HEK293T (cell line): ENCODE measurements at regions of chr17 and their contacts with region 1.

Region 1: DNA sequence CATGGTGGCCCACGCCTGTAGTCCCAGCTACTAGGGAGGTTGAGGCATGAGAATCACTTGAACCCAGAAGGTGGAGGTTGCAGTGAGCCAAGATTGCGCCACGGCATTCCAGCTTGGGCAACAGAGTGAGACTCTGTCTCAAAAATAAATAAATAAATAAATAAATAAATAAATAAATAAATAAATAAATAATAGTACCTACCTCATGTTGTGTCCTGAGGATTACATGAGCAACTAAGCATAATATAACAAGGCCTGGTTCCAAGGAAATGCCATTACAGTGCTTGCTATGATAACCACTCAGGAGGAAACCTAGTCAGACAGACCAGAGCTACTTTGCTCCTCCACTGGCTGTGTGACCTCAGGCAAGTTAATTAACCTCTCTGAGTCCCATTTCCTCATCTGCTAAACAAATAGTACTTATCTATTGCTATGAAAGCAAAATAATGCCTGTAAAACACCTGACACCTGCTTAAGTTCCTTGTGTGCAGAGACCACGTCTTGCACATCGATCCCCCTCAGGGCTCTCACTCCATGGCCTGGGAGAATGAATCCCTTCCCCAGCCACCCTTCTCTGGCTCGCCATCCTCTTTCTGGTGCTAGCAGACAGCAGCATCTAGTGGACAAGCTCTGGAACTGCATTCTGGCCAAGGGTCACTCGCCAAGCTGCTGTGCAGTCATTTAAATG is 7.5 kb downstream of the EPOP start:
- DNase-seq: peak; percentile 75

Region 2: DNA sequence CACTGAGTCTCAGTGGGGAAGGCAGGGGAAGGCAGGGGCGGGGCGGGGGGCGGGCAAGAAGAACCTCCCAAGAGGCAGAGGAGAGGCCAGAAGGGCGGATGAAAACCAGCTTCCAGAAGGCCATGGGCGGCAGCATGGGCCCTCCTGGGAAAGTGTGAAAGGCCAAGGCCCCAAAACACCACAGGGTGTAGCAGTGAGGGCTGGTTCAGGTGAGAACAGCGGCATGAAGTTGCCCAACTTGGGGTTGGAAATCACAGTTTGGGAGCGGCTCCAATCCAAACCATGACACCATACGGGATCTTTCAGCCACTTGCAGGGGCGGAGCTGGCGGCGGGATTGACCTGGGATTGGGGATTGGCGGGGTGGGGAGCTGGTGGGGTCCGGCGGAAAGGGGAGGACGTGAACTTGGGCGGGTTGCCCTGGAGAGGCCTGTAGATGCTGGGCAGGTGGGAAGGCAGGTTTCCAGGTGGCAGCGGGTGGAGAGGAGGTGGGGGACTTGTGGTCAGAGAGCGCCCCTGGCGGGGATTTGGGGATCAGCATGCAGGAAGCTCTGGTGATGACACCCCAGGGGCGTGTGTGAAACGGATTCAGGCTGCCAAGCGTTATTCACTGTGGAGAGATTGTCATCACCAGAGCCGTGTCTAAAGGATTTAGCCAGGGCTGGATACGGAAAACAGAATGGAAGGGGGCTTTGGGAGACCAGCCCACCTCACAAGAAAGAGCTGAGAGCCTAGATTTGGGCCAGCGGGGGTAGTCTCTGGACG is 158.1 kb before region 1 on chr17:
- CTCF ChIA-PET with region 1: interaction called, 14 read pairs
- POLR2A ChIA-PET with region 1: interaction called, 3 read pairs
- DNase-seq: peak; percentile 76

Region 3: DNA sequence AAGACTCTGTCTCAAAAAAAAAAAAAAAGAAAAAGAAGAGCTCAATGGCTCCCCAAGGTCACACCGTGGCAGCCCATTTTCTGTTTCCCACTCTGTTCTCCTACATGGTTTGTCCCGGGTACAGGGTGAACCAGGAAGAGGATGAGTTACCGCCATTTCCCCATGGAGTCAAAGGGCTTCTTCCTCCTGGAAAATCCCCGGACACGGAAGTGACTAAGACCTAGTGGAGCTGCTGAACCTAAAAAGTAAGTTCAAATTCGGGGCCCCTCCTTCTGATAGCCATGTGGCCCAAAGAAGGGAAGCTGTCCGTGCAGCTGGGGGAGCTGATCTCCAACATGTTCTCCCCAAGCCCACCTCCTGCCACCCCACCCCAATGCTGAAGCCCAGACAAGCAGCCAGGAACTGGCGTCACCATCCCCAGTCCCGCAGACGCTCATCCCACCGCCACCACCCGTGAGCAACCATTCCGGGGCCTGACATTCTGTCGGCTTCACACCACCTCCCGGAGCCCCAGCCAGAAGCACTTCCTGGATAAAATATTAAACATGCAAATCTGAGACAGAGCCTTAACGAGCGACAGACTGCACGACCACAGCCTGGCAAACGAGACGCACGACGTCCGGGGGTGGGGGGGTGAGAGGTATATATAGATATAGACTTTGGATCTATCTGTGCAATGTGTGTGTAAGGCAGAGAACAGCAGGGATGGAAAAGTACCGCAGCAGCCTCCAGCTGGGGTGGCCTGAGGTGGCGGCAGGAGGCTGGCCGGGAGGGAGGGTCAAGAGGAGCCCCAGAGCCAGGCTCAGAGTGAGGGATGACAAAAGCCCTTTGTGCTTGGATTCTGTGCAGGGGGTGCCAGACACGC is 10.1 kb before region 1 on chr17:
- CTCF ChIA-PET with region 1: interaction called, 17 read pairs
- POLR2A ChIA-PET with region 1: no interaction called
- DNase-seq: no peak

Region 4: GRCh38 chr17:38786372-38786771 is 119.1 kb after region 1 on chr17:
- CTCF ChIA-PET with region 1: no interaction called
- POLR2A ChIA-PET with region 1: no interaction called
- DNase-seq: no peak